Activated CD8-positive, alpha-beta T cell treated with anti-CD3 and anti-CD28 coated beads, Interleukin-2, amount 10 ng/mL, durations not matched to agents 7 days and 5 days (primary cell): ENCODE measurements at regions of chr17 and their contacts with region 1.

Region 1: GRCh38 chr17:44864866-44865660 is 17.4 kb downstream of the HIGD1B start:
- DNase-seq: peak; percentile 84
- ATAC-seq: peak; percentile 83
- H3K4me3 Mint-ChIP-seq: no peak overlapping the region
- H3K27ac Mint-ChIP-seq: no peak overlapping the region
- H3K4me1 Mint-ChIP-seq: no peaks in the 10 kb centered on the region
- H3K27me3 Mint-ChIP-seq: no peaks in the 10 kb centered on the region

Region 2: DNA sequence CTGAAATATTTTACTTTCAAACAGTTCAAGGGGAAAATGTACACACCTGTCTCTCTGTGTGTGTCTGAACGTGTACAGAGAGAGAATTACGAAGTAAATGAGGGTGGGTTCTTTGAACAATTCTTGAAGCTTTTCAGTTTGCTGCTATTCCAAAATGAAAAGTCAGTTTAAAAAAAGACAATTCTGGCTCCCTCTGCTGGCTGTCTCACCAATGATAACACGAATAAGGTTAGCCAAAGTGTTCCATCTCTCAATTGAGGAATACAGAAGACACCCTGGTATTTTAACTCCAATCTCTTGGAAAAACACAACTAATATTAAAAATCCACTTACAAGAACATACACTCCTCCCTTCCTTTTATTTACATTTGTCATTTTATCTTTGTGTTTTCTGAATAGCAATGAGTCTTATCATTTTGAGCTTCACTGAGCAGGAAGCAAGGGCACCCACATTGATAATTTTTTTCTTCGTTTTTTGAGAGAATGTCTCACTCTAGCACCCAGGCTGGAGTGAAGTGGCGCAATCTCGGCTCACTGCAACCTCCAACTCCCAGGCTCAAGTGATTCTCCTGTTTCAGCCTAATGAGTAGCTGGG is 13.7 kb after region 1 on chr17:
- CTCF ChIA-PET with region 1: interaction called, 49 read pairs
- POLR2A ChIA-PET with region 1: no interaction called
- DNase-seq: peak; percentile 54
- ATAC-seq: no peak
- H3K4me3 Mint-ChIP-seq: no peak overlapping the region
- H3K27ac Mint-ChIP-seq: peak overlapping the region; percentile 4
- H3K4me1 Mint-ChIP-seq: no peaks in the 10 kb centered on the region
- H3K27me3 Mint-ChIP-seq: no peaks in the 10 kb centered on the region

Region 3: DNA sequence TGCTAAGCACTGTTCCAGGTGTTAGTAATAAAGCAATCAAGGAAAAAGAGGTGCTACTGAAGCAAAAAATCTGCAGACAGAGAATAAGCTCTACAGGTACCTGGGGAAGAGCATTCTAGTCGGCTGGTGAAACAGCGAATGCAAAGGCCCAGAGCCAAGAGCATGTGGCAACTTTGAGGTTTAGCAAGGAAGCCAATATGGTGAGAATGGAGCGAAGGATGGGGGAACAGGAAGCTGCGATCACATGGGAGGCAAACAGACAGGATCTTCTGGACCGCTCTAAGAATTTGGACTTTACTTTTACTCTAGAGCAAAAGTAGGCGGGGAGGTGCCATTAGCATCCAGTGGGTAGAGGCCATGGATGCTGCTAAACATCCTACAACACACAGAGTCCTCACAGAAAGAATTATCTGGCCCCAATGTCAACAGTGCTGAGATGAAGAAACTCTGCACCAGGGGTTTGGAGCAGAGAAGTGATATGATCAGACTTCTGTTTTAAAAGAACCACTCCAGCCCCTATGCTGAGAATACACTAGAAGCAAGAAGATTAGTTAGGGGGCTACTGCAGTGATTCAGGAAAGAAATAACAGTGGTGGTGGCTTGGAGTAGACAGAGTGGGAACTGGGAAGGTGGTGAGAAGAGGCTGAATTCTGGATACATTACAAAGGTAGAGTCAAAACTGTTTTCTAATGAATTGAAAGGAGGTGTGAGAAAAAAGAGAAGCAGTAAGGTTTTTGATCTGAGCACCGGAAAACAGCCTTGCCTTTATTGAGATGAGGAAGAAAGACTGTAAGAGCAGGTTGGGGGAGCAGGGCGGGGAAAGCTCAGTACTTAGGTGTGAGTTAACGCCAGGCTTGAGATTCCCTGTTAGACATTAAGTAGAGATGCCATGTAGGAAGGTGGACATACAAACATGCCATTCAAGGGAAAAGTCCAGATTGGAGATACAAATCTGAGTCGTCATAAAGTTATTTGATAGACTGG is 23.2 kb after region 1 on chr17:
- CTCF ChIA-PET with region 1: interaction called, 33 read pairs
- POLR2A ChIA-PET with region 1: no interaction called
- DNase-seq: peak; percentile 52
- ATAC-seq: peak; percentile 80
- H3K4me3 Mint-ChIP-seq: no peak overlapping the region
- H3K27ac Mint-ChIP-seq: no peak overlapping the region
- H3K4me1 Mint-ChIP-seq: peaks cover 4% of the 10 kb centered on the region
- H3K27me3 Mint-ChIP-seq: no peaks in the 10 kb centered on the region